B cell (primary cell): ENCODE measurements at regions of chr10 and their contacts with region 1.

Region 1: GRCh38 chr10:73810735-73811465 is 498 bp downstream of the NDST2 start:
- DNase-seq: no peak
- ATAC-seq: peak; percentile 7
- H3K4me3 ChIP-seq: peak overlapping the region; percentile 58 to 83 (median 76)
- H3K4me3 Mint-ChIP-seq: peak overlapping the region; percentile 88
- H3K27ac ChIP-seq: peak overlapping the region; percentile 52 to 94
- H3K27ac Mint-ChIP-seq: peak overlapping the region; percentile 93
- H3K4me1 ChIP-seq: peaks cover 4 to 26% of the 10 kb centered on the region in 2 donors
- H3K4me1 Mint-ChIP-seq: peaks cover 33% of the 10 kb centered on the region
- H3K27me3 ChIP-seq: no peaks in the 10 kb centered on the region
- H3K27me3 Mint-ChIP-seq: no peaks in the 10 kb centered on the region
- CTCF ChIP-seq: no peak

Region 2: DNA sequence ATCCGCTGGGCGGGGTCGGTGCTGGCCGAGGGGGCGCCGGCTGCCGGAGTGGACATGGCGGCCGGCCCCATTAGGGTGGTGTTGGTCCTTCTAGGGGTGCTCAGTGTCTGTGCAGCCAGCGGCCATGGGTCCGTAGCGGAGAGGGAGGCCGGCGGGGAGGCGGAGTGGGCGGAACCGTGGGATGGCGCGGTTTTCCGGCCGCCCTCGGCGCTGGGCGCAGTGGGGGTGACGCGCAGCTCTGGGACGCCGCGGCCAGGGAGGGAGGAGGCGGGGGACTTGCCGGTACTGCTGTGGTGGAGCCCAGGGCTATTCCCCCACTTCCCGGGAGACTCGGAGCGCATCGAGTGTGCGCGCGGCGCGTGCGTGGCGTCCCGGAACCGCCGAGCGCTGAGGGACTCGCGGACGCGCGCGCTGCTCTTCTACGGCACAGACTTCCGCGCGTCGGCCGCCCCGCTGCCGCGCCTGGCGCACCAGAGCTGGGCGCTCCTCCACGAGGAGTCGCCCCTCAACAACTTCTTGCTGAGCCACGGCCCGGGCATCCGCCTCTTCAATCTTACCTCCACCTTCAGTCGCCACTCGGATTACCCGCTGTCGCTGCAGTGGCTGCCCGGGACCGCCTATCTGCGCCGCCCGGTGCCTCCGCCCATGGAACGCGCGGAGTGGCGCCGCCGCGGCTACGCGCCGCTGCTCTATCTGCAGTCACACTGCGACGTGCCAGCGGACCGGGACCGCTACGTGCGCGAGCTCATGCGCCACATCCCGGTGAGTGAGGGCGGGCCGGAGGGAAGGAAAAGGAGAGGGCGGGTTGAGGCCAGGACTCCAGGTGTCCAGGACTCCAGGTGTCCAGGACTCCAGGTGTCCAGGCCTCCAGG is 38.4 kb before region 1 on chr10:
- CTCF ChIA-PET with region 1: interaction called, 5 read pairs
- POLR2A ChIA-PET with region 1: interaction called, 6 read pairs
- intact Hi-C with region 1: loop called (anchors 1 kb)
- DNase-seq: peak; percentile 91
- ATAC-seq: peak; percentile 66
- H3K4me3 ChIP-seq: peak overlapping the region; percentile 66 to 94 (median 89)
- H3K4me3 Mint-ChIP-seq: peak overlapping the region; percentile 97
- H3K27ac ChIP-seq: peak overlapping the region; percentile 85 to 93
- H3K27ac Mint-ChIP-seq: peak overlapping the region; percentile 98
- H3K4me1 ChIP-seq: peaks cover 30 to 47% of the 10 kb centered on the region in 2 donors
- H3K4me1 Mint-ChIP-seq: peaks cover 63% of the 10 kb centered on the region
- H3K27me3 ChIP-seq: no peaks in the 10 kb centered on the region
- H3K27me3 Mint-ChIP-seq: no peaks in the 10 kb centered on the region
- CTCF ChIP-seq: no peak

Region 3: DNA sequence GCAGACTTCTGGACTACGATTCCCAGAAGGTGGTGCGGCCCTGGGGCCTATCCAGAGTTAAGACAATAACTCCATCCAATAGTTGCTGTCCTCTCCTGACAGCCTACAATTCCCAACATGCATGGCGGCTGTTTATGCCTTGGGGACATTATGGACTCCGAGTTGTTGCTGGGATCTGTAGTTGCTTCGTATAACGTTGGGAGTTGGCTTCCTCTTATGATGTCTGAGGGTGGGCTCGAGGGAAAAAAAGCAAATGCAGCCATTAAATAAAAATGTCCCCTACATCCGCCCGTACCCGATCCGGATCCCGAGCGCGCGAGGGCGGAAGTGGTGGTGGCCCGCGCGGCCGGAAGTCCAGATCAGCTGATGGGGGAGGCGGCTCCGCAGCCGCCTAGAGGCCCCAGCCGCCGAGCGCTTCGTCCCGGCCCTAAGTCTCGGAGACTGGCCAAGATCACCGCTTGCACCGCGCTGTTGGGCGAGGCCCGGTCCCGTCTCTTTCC is 25.6 kb before region 1 on chr10 and contains the start of gene ZSWIM8:
- CTCF ChIA-PET with region 1: interaction called, 3 read pairs
- POLR2A ChIA-PET with region 1: interaction called, 4 read pairs
- intact Hi-C with region 1: loop called (anchors 1 kb)
- DNase-seq: peak; percentile 95
- ATAC-seq: peak; percentile 87
- H3K4me3 ChIP-seq: peak within 1 kb of the TSS; percentile 56 to 97 (median 85)
- H3K4me3 Mint-ChIP-seq: peak within 1 kb of the TSS; percentile 96
- H3K27ac ChIP-seq: peak within 1 kb of the TSS; percentile 53 to 74
- H3K27ac Mint-ChIP-seq: peak within 1 kb of the TSS; percentile 98
- H3K4me1 ChIP-seq: peaks cover 32 to 46% of the 10 kb centered on the region in 2 donors
- H3K4me1 Mint-ChIP-seq: peaks cover 48% of the 10 kb centered on the region
- H3K27me3 ChIP-seq: no peaks in the 10 kb centered on the region
- H3K27me3 Mint-ChIP-seq: no peaks in the 10 kb centered on the region
- CTCF ChIP-seq: no peak
- total RNA-seq, gene ZSWIM8: 110 and 113 TPM in 2 replicates

Region 4: GRCh38 chr10:73848821-73849489 is 38.1 kb after region 1 on chr10:
- CTCF ChIA-PET with region 1: interaction called, 7 read pairs
- POLR2A ChIA-PET with region 1: no interaction called
- intact Hi-C with region 1: loop called (anchors 5 kb)
- DNase-seq: peak; percentile 96
- ATAC-seq: peak; percentile 100
- H3K4me3 ChIP-seq: no peak overlapping the region
- H3K4me3 Mint-ChIP-seq: peak overlapping the region; percentile 12
- H3K27ac ChIP-seq: peak overlapping the region; percentile 51 to 71
- H3K27ac Mint-ChIP-seq: peak overlapping the region; percentile 47
- H3K4me1 ChIP-seq: peaks cover 7 to 17% of the 10 kb centered on the region in 2 donors
- H3K4me1 Mint-ChIP-seq: peaks cover 13% of the 10 kb centered on the region
- H3K27me3 ChIP-seq: no peaks in the 10 kb centered on the region
- H3K27me3 Mint-ChIP-seq: no peaks in the 10 kb centered on the region
- CTCF ChIP-seq: peak; percentile 99

Region 5: DNA sequence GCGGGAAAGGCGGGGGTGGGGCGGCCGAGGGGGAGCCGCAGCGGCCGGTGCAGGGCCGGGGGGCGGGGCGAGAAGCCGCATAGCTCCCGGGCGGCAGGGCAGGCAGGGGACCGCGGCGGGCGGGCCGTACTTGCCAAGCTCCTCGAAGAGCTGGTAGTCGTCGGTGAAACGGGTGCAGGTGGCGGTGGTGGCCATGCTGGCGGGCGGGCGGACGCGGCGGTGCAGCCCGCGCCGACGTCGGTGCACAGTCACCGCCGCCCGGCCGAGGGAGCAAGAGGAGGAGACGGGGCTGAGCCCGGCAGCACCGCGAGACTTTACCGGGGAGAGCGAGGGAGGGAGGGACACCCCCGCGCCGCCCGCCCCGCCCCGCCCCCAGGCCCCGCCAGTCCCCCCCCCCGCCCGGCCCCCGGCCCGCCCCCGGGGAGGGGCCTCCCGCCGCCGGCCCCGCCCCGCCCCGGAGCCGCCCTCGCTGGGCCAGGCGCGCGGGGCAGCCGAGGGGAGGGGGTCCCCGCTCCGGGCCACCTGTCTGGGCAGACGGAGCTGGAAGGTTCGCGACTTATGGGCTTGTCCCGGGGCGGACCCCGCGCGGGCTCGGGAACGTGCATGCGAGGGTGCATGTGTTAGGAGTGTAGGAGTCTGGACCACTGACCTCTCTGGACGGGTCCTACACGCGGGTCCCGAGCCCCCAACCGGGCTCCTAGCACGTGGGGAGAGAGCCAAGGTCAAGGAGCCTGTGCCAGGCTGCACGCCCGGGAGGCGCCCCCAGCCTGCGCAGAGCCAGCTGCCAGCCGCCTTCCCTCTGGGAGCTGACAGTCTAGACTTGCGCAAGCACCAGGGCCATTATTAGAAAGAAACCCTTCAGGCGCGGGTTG is 63.6 kb after region 1 on chr10 and contains the start of gene CAMK2G:
- CTCF ChIA-PET with region 1: interaction called, 13 read pairs
- POLR2A ChIA-PET with region 1: no interaction called
- intact Hi-C with region 1: loop called (anchors 1 kb)
- DNase-seq: peak; percentile 92
- ATAC-seq: peak; percentile 87
- H3K4me3 ChIP-seq: peak within 1 kb of the TSS; percentile 81 to 98 (median 92)
- H3K4me3 Mint-ChIP-seq: peak within 1 kb of the TSS; percentile 95
- H3K27ac ChIP-seq: peak within 1 kb of the TSS; percentile 71 to 74
- H3K27ac Mint-ChIP-seq: peak within 1 kb of the TSS; percentile 85
- H3K4me1 ChIP-seq: peaks cover 18 to 39% of the 10 kb centered on the region in 2 donors
- H3K4me1 Mint-ChIP-seq: peaks cover 46% of the 10 kb centered on the region
- H3K27me3 ChIP-seq: no peaks in the 10 kb centered on the region
- H3K27me3 Mint-ChIP-seq: no peaks in the 10 kb centered on the region
- CTCF ChIP-seq: no peak
- total RNA-seq, gene CAMK2G: 42.7 and 45.1 TPM in 2 replicates

Region 6: GRCh38 chr10:73997787-73998622 is 187.1 kb after region 1 on chr10 and contains the start of gene VCL:
- CTCF ChIA-PET with region 1: no interaction called
- POLR2A ChIA-PET with region 1: no interaction called
- intact Hi-C with region 1: loop called (anchors 1 kb)
- DNase-seq: peak; percentile 97
- ATAC-seq: peak; percentile 97
- H3K4me3 ChIP-seq: peak within 1 kb of the TSS; percentile 77 to 96 (median 93)
- H3K4me3 Mint-ChIP-seq: peak within 1 kb of the TSS; percentile 99
- H3K27ac ChIP-seq: peak within 1 kb of the TSS; percentile 61 to 89
- H3K27ac Mint-ChIP-seq: peak within 1 kb of the TSS; percentile 96
- H3K4me1 ChIP-seq: peaks cover 20 to 26% of the 10 kb centered on the region in 2 donors
- H3K4me1 Mint-ChIP-seq: peaks cover 45% of the 10 kb centered on the region
- H3K27me3 ChIP-seq: no peaks in the 10 kb centered on the region
- H3K27me3 Mint-ChIP-seq: no peaks in the 10 kb centered on the region
- CTCF ChIP-seq: no peak
- total RNA-seq, gene VCL: 29.8 and 37.0 TPM in 2 replicates